A549 (cell line): ENCODE measurements at regions of chr2 and their contacts with region 1.

Region 1: DNA sequence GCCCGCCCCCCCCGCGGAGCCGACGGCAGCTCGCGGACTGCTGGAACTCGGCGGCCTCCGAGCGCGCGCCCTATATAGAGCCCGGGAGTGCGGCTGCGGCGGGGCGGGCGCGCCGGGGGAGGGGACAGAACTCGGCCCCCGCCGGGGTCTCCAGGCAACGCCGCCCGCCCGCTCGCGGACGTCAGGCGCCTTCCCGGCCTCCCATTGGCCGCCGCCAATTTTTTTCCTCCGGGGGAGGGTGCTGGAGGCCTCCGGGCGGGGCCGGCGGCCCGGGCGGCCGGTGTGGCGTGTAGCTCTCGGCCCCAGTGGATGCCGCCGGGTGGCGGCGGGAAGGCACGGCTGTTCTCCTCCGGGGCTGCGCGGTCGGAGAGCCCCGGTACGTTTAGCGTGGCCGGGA is at the start of gene ZFP36L2:
- DNase-seq: peak; percentile 96 to 97
- ATAC-seq: peak; percentile 58 to 78
- H3K4me3 ChIP-seq: peak within 1 kb of the TSS; percentile 86
- H3K27ac ChIP-seq: peak within 1 kb of the TSS; percentile 89 to 98
- H3K4me1 ChIP-seq: peaks cover 40% of the 10 kb centered on the region
- CTCF ChIP-seq: no peak
- EP300 ChIP-seq: no peak
- POLR2A ChIP-seq: peak; percentile 84
- RAD21 ChIP-seq: no peak; a peak in 1 of 5 replicates
- polyA plus RNA-seq, gene ZFP36L2: 10.5 and 14.9 TPM in 2 replicates

Region 2: DNA sequence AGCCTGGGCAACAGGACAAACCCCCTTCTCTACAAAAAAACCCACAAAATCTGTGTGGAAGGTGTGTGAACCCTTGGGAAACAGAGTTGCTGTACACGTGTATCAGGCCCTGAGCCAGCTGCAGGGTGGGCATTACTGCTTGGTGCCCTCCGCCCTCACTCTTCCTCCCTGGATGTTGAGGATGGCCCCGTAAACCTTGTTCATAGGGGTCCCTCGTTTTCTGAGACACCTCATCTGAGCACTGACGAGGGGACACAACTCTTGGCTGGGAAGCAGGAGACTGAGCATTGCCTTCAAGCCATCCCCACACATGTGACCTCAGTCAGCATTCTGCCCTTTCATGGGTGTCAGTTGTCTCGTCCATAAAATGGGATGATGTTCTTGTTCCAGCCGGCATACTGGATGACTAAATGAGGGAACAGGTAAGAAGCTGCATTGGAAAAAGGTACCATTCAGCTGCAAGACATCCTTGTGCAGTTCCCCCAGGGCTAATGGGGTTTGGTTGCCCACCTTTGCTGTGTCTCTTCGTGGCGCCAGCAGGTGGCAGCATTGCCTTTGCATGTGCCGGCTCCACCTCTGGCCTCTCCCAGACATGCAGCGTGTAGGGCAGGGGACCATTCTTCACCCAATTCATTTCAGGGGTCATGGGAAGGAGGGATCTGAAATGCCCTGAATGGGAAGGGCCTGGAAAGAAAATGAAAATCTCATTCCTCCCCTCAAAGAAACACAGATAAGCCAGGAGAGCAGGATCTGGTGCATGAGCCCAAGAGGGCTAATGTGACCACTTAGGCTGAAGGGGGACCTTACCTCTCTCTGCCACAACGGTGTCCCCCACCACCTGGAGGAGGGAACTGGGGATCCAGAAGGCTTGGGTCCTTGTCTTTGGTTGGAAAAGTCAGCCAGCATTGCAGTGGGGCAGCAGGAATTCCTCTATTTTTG is 397.8 kb before region 1 on chr2:
- CTCF ChIA-PET with region 1: interaction called, 82 read pairs
- POLR2A ChIA-PET with region 1: no interaction called
- DNase-seq: peak; percentile 80 to 96
- ATAC-seq: peak; percentile 89 to 96
- H3K4me3 ChIP-seq: no peak overlapping the region
- H3K27ac ChIP-seq: peak overlapping the region; percentile 9 to 57; a peak in 5 of 6 replicates
- H3K4me1 ChIP-seq: peaks cover 15% of the 10 kb centered on the region
- CTCF ChIP-seq: peak; percentile 93
- EP300 ChIP-seq: no peak
- POLR2A ChIP-seq: no peak
- RAD21 ChIP-seq: peak; percentile 87 to 93

Region 3: DNA sequence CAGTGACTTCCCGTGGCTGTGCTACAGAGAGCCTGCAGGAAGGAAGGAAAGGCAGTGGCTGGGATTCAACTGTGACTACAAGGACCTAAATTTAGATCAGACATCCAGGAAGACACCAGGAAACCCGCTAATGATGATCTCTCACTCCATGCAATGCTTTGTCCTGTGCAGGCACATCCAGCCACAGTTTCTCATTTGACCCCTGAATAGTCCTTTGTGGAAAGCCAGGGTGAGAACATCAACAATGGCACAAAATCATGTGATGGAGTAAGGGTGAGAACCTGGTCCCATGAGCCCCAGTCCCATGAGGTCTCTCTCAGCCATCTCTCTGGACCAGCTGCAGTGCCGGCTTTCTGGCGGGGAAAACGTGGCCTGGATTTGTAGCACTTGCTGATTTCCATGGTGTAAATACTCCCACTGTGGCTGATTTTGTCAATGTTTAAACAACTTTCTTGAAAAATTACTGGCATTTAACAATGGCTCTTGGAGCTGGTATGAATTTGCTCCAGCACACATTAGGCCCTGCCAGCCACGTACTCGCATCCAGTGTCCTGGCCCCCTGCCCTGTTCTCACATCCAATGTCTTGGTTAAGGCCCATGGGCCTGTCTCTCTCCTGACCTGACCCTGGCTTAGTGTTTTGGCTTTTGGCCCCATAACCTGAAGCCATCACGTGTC is 275.2 kb before region 1 on chr2:
- CTCF ChIA-PET with region 1: interaction called, 166 read pairs
- POLR2A ChIA-PET with region 1: interaction called, 7 read pairs
- DNase-seq: no peak
- ATAC-seq: no peak
- H3K4me3 ChIP-seq: no peak overlapping the region
- H3K27ac ChIP-seq: no peak overlapping the region
- H3K4me1 ChIP-seq: no peaks in the 10 kb centered on the region
- CTCF ChIP-seq: no peak
- EP300 ChIP-seq: no peak
- POLR2A ChIP-seq: no peak
- RAD21 ChIP-seq: no peak

Region 4: DNA sequence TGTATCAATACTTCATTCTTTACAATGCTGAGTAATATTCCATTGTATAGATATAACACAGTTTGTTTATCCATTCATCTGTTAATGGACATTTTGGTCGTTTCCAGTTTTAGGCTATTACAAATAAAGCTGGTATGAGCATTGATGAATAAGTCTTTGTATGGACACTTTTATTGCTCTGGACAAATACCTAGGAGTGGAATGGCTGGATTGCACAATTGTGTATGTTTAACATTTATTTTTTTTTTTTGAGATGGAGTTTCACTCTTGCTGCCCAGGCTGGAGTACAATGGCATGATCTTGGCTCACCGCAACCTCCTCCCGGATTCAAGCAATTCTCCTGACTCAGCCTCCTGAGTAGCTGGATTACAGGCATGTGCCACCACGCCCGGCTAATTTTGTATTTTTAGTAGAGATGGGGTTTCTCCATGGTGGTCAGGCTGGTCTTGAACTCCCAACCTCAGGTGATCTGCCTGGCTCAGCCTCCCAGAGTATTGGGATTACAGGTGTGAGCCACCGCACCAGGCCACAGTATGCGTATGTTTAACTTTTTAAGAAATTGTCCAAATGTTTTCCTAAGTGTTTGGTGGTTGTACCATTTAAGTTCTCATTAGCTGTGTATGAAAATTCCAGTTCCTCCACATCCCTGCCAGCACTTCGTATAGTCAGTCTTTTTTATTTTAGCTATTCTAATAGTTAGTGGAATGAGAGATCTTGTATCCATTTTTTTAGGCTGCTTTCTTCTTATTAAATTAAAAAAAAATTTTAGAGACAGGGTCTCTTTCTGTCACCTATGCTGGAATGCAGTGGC is 239.2 kb before region 1 on chr2:
- CTCF ChIA-PET with region 1: interaction called, 26 read pairs
- POLR2A ChIA-PET with region 1: interaction called, 5 read pairs
- DNase-seq: peak in 1 of 2 experiments; percentile 47
- ATAC-seq: peak in 1 of 2 experiments; percentile 40; a peak in 3 of 6 replicates
- H3K4me3 ChIP-seq: no peak overlapping the region
- H3K27ac ChIP-seq: peak overlapping the region in 1 of 2 experiments; percentile 42; a peak in 3 of 6 replicates
- H3K4me1 ChIP-seq: peaks cover 15% of the 10 kb centered on the region
- CTCF ChIP-seq: no peak
- EP300 ChIP-seq: peak in 1 of 2 experiments; percentile 32; a peak in 1 of 5 replicates
- POLR2A ChIP-seq: no peak
- RAD21 ChIP-seq: peak in 1 of 2 experiments; percentile 24; a peak in 1 of 5 replicates

Region 5: DNA sequence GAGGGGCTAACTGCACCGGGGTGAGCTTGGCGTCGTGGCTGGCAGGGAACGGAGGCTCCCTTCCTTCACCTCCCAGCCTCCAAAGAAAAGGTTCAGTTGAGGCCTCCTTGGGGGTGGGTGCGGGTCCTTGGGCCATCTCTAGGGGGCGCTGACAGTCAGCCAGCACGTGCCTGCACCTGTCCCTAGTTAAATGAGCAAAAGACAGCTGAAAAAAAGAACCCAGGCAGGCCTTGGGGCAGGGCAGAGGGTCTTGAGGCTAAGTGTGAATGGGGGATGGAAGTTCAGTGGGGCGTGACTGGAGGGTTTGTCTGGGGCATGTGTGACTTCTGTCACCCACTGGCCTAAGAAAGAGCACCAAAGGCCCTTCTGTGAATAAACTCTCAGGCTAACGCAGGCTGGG is 56.6 kb before region 1 on chr2:
- CTCF ChIA-PET with region 1: interaction called, 20 read pairs
- POLR2A ChIA-PET with region 1: interaction called, 3 read pairs
- DNase-seq: peak in 1 of 2 experiments; percentile 64
- ATAC-seq: peak in 1 of 2 experiments; percentile 47; a peak in 3 of 6 replicates
- H3K4me3 ChIP-seq: no peak overlapping the region
- H3K27ac ChIP-seq: peak overlapping the region; percentile 82 to 93
- H3K4me1 ChIP-seq: peaks cover 74% of the 10 kb centered on the region
- CTCF ChIP-seq: peak; percentile 65
- EP300 ChIP-seq: no peak
- POLR2A ChIP-seq: no peak
- RAD21 ChIP-seq: peak; percentile 51 to 66; a peak in 4 of 5 replicates

Region 6: DNA sequence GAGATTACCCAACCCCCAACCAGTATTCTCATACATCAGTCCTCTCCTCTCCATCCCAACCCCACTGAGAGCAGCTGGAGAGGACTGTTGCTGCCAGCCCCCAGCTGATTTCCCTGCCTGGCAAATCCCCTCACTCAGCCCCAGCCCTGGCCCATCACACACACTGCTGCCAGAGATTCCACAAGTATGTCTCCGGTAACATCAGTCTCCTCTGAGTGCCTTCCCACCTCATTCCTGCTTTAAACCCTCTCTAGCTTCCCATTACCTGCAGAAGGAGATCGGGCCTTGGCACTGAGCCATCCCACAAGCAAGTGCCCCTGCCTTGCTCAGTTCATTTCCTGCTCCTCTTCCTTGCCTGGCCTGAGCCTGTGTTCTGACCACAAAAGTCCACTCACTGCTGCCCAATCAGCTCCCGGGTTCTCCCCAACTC is 50.4 kb after region 1 on chr2:
- CTCF ChIA-PET with region 1: interaction called, 10 read pairs
- POLR2A ChIA-PET with region 1: no interaction called
- DNase-seq: no peak
- ATAC-seq: peak in 1 of 2 experiments; percentile 16; a peak in 3 of 6 replicates
- H3K4me3 ChIP-seq: no peak overlapping the region
- H3K27ac ChIP-seq: peak overlapping the region; percentile 39 to 56; a peak in 4 of 6 replicates
- H3K4me1 ChIP-seq: peaks cover 17% of the 10 kb centered on the region
- CTCF ChIP-seq: no peak
- EP300 ChIP-seq: no peak
- POLR2A ChIP-seq: no peak
- RAD21 ChIP-seq: no peak